CD8-positive, alpha-beta memory T cell (primary cell): ENCODE measurements at regions of chr3 and their contacts with region 1.

Region 1: GRCh38 chr3:36957862-36958686 is 13.2 kb upstream of the TRANK1 start:
- DNase-seq: no peak
- H3K4me3 ChIP-seq: no peak overlapping the region
- H3K4me3 Mint-ChIP-seq: peak overlapping the region in 3 of 7 donors; percentile 23 to 70 (median 35)
- H3K27ac ChIP-seq: peak overlapping the region; percentile 68
- H3K27ac Mint-ChIP-seq: peak overlapping the region; percentile 26 to 75 (median 55)
- H3K4me1 ChIP-seq: no peaks in the 10 kb centered on the region
- H3K4me1 Mint-ChIP-seq: peaks cover 8 to 16% (median 11%) of the 10 kb centered on the region in 3 donors
- H3K27me3 ChIP-seq: no peaks in the 10 kb centered on the region
- H3K27me3 Mint-ChIP-seq: no peaks in the 10 kb centered on the region

Region 2: GRCh38 chr3:36868614-36869436 is 89.2 kb before region 1 on chr3:
- CTCF ChIA-PET with region 1: interaction called, 20 read pairs
- POLR2A ChIA-PET with region 1: no interaction called
- DNase-seq: peak; percentile 18 to 54 (median 33)
- H3K4me3 ChIP-seq: no peak overlapping the region
- H3K4me3 Mint-ChIP-seq: no peak overlapping the region
- H3K27ac ChIP-seq: no peak overlapping the region
- H3K27ac Mint-ChIP-seq: peak overlapping the region; percentile 60 to 95 (median 81)
- H3K4me1 ChIP-seq: peaks cover 13% of the 10 kb centered on the region
- H3K4me1 Mint-ChIP-seq: peaks cover 34 to 51% (median 49%) of the 10 kb centered on the region in 3 donors
- H3K27me3 ChIP-seq: no peaks in the 10 kb centered on the region
- H3K27me3 Mint-ChIP-seq: no peaks in the 10 kb centered on the region

Region 3: GRCh38 chr3:36893137-36893557 is 64.9 kb before region 1 on chr3:
- CTCF ChIA-PET with region 1: interaction called, 16 read pairs
- POLR2A ChIA-PET with region 1: interaction called, 4 read pairs
- DNase-seq: peak in 4 of 5 donors; percentile 25 to 74 (median 45)
- H3K4me3 ChIP-seq: no peak overlapping the region
- H3K4me3 Mint-ChIP-seq: peak overlapping the region in 6 of 7 donors; percentile 4 to 54 (median 28)
- H3K27ac ChIP-seq: peak overlapping the region; percentile 30
- H3K27ac Mint-ChIP-seq: peak overlapping the region; percentile 71 to 96 (median 92)
- H3K4me1 ChIP-seq: peaks cover 47% of the 10 kb centered on the region
- H3K4me1 Mint-ChIP-seq: peaks cover 52 to 74% (median 59%) of the 10 kb centered on the region in 3 donors
- H3K27me3 ChIP-seq: no peaks in the 10 kb centered on the region
- H3K27me3 Mint-ChIP-seq: no peaks in the 10 kb centered on the region

Region 4: DNA sequence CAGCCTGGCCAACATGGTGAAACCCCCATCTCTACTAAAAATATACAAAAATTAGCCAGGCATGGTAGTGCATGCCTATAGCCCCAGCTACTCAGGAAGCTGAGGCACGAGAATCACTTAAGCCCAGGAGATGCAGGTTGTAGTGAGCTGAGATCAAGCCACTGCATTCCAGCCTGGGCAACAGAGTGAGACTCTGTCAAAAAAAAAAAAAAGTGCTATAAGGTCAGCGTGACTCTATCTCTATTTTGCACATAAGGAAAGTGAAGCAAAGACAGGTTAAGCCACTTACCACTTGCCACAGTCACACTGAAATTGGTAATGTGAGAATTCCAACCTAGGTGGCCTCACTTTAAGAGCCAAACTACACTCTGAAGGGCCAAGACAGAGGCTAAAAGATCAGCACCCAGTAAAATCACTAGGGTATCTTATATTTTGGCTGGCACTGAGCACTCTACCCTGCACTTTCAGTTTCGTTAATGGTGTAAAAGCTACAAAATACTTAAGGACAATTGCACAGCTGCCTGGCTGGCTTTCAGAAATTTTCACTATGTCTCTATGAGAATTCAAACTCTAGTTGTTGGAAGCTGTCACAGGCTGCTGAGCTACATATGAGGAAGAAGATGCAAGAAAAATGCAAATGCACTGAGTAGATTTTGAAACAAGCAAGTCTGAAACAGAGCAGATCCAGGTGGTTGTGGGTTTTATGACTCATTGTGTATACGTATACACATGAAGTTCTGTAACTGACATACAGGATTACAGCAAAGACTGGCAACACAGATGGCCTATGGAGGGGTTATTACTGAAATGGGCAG is 45.9 kb before region 1 on chr3:
- CTCF ChIA-PET with region 1: interaction called, 22 read pairs
- POLR2A ChIA-PET with region 1: no interaction called
- DNase-seq: peak in 4 of 5 donors; percentile 4 to 57 (median 51)
- H3K4me3 ChIP-seq: peak overlapping the region; percentile 46
- H3K4me3 Mint-ChIP-seq: peak overlapping the region; percentile 75 to 85 (median 78)
- H3K27ac ChIP-seq: peak overlapping the region; percentile 60
- H3K27ac Mint-ChIP-seq: peak overlapping the region; percentile 77 to 97 (median 84)
- H3K4me1 ChIP-seq: peaks cover 27% of the 10 kb centered on the region
- H3K4me1 Mint-ChIP-seq: peaks cover 34 to 57% (median 46%) of the 10 kb centered on the region in 3 donors
- H3K27me3 ChIP-seq: no peaks in the 10 kb centered on the region
- H3K27me3 Mint-ChIP-seq: peaks cover 0 to 2% of the 10 kb centered on the region in 2 donors

Region 5: DNA sequence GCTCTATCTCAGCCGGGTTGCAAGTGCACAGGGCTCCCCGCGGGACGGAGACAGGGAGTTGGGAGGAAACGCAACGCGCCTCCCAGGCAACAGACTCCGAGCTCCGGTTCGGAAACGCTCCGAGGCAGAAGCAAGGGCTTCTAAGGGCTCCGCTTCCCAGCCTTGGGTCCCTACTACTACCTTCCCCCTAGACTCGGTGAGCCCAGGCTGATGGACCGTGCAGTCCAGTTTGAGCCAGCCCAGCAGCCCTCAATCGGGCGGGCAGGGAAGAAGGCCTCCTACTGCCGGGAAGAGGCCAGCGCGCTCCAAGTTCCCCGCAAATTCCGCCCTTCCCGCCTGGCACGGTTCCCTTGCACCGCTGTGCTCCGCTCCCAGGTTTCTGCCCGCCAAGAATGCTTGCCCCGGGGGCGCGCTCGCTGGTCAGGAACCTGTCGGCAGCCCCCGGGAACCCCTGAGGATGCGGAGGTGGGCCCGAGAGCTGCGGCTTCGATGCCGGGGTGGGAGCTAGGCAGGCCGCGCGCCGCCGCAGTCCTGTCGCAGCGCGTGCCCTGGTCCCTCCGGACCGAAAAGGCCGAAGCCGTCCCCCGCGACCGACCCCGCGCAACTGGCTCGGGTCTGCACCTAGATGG is 13.9 kb before region 1 on chr3:
- CTCF ChIA-PET with region 1: interaction called, 20 read pairs
- POLR2A ChIA-PET with region 1: interaction called, 8 read pairs
- DNase-seq: peak; percentile 7 to 56 (median 44)
- H3K4me3 ChIP-seq: peak overlapping the region; percentile 64
- H3K4me3 Mint-ChIP-seq: peak overlapping the region; percentile 85 to 91 (median 86)
- H3K27ac ChIP-seq: peak overlapping the region; percentile 65
- H3K27ac Mint-ChIP-seq: peak overlapping the region; percentile 22 to 89 (median 68)
- H3K4me1 ChIP-seq: peaks cover 14% of the 10 kb centered on the region
- H3K4me1 Mint-ChIP-seq: peaks cover 14 to 43% (median 26%) of the 10 kb centered on the region in 3 donors
- H3K27me3 ChIP-seq: no peaks in the 10 kb centered on the region
- H3K27me3 Mint-ChIP-seq: peaks cover 0 to 1% of the 10 kb centered on the region in 2 donors

Region 6: GRCh38 chr3:36993326-36994283 is 35.5 kb after region 1 on chr3 and contains the start of gene MLH1:
- CTCF ChIA-PET with region 1: interaction called, 12 read pairs
- POLR2A ChIA-PET with region 1: interaction called, 7 read pairs
- DNase-seq: peak; percentile 91 to 99 (median 94)
- H3K4me3 ChIP-seq: peak within 1 kb of the TSS; percentile 93
- H3K4me3 Mint-ChIP-seq: no peak within 1 kb of the TSS
- H3K27ac ChIP-seq: peak within 1 kb of the TSS; percentile 100
- H3K27ac Mint-ChIP-seq: no peak within 1 kb of the TSS
- H3K4me1 ChIP-seq: peaks cover 48% of the 10 kb centered on the region
- H3K4me1 Mint-ChIP-seq: peaks cover 19 to 40% (median 22%) of the 10 kb centered on the region in 3 donors
- H3K27me3 ChIP-seq: no peaks in the 10 kb centered on the region
- H3K27me3 Mint-ChIP-seq: no peaks in the 10 kb centered on the region
- total RNA-seq, gene MLH1: 66.4 to 73.2 TPM

Region 7: GRCh38 chr3:37718647-37719046 is 760.6 kb after region 1 on chr3:
- CTCF ChIA-PET with region 1: no interaction called
- POLR2A ChIA-PET with region 1: no interaction called
- DNase-seq: no peak
- H3K4me3 ChIP-seq: no peak overlapping the region
- H3K4me3 Mint-ChIP-seq: no peak overlapping the region
- H3K27ac ChIP-seq: no peak overlapping the region
- H3K27ac Mint-ChIP-seq: no peak overlapping the region
- H3K4me1 ChIP-seq: no peaks in the 10 kb centered on the region
- H3K4me1 Mint-ChIP-seq: no peaks in the 10 kb centered on the region
- H3K27me3 ChIP-seq: no peaks in the 10 kb centered on the region
- H3K27me3 Mint-ChIP-seq: peaks cover 0 to 4% of the 10 kb centered on the region in 2 donors